PC-3 (cell line): ENCODE measurements at regions of chr1 and their contacts with region 1.

Region 1: DNA sequence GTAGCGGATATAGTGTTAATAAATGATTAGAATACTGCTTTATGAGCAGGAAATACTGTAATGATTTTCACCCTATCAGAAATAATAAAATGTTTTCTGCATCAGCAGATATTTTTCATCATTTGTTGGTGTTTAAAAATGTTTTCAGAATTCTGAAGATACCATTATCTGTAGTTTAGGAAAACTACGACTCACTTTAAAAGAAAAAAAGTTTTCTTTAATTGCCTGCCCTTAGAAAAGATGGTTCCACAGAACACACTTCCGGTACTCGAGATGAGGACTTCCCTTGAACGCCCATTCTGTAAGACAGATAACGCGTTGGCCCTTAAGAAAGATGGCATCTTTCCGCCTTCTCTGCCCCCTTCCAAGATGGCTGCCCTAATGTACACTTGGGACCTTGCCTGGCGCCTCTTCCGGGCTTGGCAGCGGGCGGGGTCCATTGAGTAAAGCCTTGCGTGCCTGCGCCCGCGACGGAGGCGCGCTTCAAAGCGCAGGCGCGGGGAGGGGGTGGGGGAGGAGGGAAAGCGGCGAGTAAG is at the start of gene SZRD1:
- DNase-seq: peak; percentile 98
- ATAC-seq: peak; percentile 76
- H3K4me3 ChIP-seq: peak within 1 kb of the TSS; percentile 79
- H3K27ac ChIP-seq: peak within 1 kb of the TSS; percentile 78
- H3K4me1 ChIP-seq: peaks cover 12% of the 10 kb centered on the region
- H3K27me3 ChIP-seq: no peaks in the 10 kb centered on the region
- CTCF ChIP-seq: no peak
- total RNA-seq, gene SZRD1: 119 and 136 TPM in 2 replicates

Region 2: DNA sequence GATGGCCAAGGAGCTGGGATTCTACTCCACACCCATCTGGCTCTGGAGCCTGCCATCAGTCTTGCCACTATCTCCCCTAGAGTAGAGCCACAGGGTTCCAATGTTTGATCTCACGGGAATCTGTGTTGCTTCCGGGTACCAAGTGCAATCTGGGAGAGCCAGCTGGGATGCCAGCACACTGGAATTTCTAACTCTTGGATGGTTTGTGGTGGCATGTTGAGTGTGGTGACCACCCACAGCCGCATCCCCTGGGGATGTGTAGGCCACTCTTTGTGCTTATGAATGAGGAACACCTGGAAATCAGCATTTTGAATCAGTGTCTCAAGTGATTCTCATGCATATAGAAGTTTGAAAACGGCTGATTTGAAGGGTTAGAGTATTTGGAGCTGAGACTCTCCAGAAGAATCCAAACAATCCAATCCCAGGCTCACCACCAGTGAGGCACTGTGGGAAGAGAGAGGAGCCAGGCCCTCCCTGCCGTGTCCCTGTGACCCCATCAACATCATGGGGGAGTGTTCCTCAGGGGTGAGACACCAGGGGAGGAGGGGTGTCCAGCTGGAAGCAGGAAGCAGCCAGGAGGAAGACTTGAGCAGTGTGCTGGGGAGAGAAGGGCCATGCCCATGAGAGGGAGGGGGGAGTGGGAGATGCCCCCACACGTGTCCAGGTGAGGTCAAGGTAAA is 594.8 kb before region 1 on chr1:
- CTCF ChIA-PET with region 1: no interaction called
- POLR2A ChIA-PET with region 1: interaction called, 12 read pairs
- intact Hi-C with region 1: no loop called
- DNase-seq: no peak
- ATAC-seq: no peak
- H3K4me3 ChIP-seq: no peak overlapping the region
- H3K27ac ChIP-seq: no peak overlapping the region
- H3K4me1 ChIP-seq: no peaks in the 10 kb centered on the region
- H3K27me3 ChIP-seq: no peaks in the 10 kb centered on the region
- CTCF ChIP-seq: no peak

Region 3: GRCh38 chr1:16078925-16079656 is 287.7 kb before region 1 on chr1:
- CTCF ChIA-PET with region 1: interaction called, 7 read pairs
- POLR2A ChIA-PET with region 1: no interaction called
- intact Hi-C with region 1: loop called (anchors 5 kb)
- DNase-seq: peak; percentile 80
- ATAC-seq: peak; percentile 55
- H3K4me3 ChIP-seq: no peak overlapping the region
- H3K27ac ChIP-seq: peak overlapping the region; percentile 8
- H3K4me1 ChIP-seq: peaks cover 35% of the 10 kb centered on the region
- H3K27me3 ChIP-seq: no peaks in the 10 kb centered on the region
- CTCF ChIP-seq: peak; percentile 92

Region 4: GRCh38 chr1:16249596-16250241 is 117.1 kb before region 1 on chr1:
- CTCF ChIA-PET with region 1: interaction called, 5 read pairs
- POLR2A ChIA-PET with region 1: no interaction called
- intact Hi-C with region 1: loop called (anchors 2 kb)
- DNase-seq: peak; percentile 14
- ATAC-seq: no peak
- H3K4me3 ChIP-seq: no peak overlapping the region
- H3K27ac ChIP-seq: no peak overlapping the region
- H3K4me1 ChIP-seq: peaks cover 55% of the 10 kb centered on the region
- H3K27me3 ChIP-seq: no peaks in the 10 kb centered on the region
- CTCF ChIP-seq: no peak

Region 5: DNA sequence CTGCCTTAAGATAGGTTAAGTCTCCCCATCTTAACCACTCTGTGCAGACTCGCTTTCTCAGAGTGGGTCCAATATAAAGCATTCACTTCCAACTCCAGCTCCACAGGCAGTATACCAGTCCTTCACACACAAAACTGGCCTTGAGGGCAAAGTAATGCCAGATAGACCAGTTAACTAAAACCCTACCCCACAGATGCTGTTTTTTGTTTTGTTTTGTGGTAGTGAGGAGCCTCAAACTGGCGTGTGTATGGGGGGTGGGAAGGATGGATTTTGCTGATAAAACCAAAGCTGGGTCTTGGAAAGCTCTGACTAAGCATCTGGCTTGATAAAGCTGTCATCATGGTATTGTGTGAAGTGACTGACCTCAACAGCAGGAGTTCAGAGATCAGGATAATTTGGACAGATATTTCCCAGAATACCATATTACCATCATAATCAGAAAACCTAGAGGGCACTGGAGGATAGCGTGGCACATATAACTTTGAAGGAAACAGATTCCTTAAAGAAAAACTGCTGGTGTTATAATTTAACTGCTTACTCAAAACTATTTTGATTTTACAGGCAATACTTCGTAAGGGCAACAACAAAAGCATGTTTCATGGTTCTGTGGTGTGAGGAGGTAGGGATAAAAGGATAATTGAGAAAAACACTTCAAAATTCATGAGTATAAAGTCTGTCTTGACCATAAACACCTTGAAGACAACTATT is 100.2 kb before region 1 on chr1:
- CTCF ChIA-PET with region 1: interaction called, 14 read pairs
- POLR2A ChIA-PET with region 1: no interaction called
- intact Hi-C with region 1: no loop called
- DNase-seq: no peak
- ATAC-seq: no peak
- H3K4me3 ChIP-seq: no peak overlapping the region
- H3K27ac ChIP-seq: no peak overlapping the region
- H3K4me1 ChIP-seq: no peaks in the 10 kb centered on the region
- H3K27me3 ChIP-seq: no peaks in the 10 kb centered on the region
- CTCF ChIP-seq: no peak

Region 6: DNA sequence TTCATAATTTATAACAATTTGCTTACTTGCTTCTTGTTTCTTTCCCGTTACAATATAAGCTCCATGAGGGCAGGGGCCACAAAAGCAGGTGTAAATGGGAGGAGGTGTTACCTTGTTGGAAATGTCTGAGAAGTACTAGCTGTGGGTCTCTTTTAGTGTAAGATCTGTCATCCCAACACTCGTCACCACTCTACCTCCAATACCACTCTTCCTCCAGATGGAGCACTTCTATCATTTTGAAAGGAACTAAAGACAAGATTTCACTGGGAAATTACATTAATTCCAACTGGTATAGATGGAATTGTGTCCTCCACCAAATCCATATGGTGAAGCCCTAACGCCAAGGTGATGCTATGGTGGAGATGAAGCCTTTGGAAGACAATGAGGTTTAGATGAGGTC is 76.8 kb before region 1 on chr1:
- CTCF ChIA-PET with region 1: interaction called, 8 read pairs
- POLR2A ChIA-PET with region 1: interaction called, 6 read pairs
- intact Hi-C with region 1: loop called (anchors 1 kb)
- DNase-seq: peak; percentile 22
- ATAC-seq: peak; percentile 54
- H3K4me3 ChIP-seq: no peak overlapping the region
- H3K27ac ChIP-seq: no peak overlapping the region
- H3K4me1 ChIP-seq: no peaks in the 10 kb centered on the region
- H3K27me3 ChIP-seq: no peaks in the 10 kb centered on the region
- CTCF ChIP-seq: peak; percentile 50

Region 7: GRCh38 chr1:16324456-16324890 is 42.3 kb before region 1 on chr1:
- CTCF ChIA-PET with region 1: no interaction called
- POLR2A ChIA-PET with region 1: no interaction called
- intact Hi-C with region 1: no loop called
- DNase-seq: peak; percentile 79
- ATAC-seq: peak; percentile 94
- H3K4me3 ChIP-seq: no peak overlapping the region
- H3K27ac ChIP-seq: no peak overlapping the region
- H3K4me1 ChIP-seq: peaks cover 18% of the 10 kb centered on the region
- H3K27me3 ChIP-seq: no peaks in the 10 kb centered on the region
- CTCF ChIP-seq: no peak

Region 8: GRCh38 chr1:16440470-16441281 is 73.9 kb after region 1 on chr1 and contains the start of gene NECAP2:
- CTCF ChIA-PET with region 1: no interaction called
- POLR2A ChIA-PET with region 1: no interaction called
- intact Hi-C with region 1: loop called (anchors 5 kb)
- DNase-seq: peak; percentile 93
- ATAC-seq: peak; percentile 95
- H3K4me3 ChIP-seq: peak within 1 kb of the TSS; percentile 90
- H3K27ac ChIP-seq: peak within 1 kb of the TSS; percentile 19; the same call in 1 of the 2 replicates
- H3K4me1 ChIP-seq: peaks cover 3% of the 10 kb centered on the region
- H3K27me3 ChIP-seq: no peaks in the 10 kb centered on the region
- CTCF ChIP-seq: peak; percentile 82
- total RNA-seq, gene NECAP2: 65.0 and 70.0 TPM in 2 replicates